ENCODE measurements at regions of chr16 and their contacts with region 1.

Region 1: DNA sequence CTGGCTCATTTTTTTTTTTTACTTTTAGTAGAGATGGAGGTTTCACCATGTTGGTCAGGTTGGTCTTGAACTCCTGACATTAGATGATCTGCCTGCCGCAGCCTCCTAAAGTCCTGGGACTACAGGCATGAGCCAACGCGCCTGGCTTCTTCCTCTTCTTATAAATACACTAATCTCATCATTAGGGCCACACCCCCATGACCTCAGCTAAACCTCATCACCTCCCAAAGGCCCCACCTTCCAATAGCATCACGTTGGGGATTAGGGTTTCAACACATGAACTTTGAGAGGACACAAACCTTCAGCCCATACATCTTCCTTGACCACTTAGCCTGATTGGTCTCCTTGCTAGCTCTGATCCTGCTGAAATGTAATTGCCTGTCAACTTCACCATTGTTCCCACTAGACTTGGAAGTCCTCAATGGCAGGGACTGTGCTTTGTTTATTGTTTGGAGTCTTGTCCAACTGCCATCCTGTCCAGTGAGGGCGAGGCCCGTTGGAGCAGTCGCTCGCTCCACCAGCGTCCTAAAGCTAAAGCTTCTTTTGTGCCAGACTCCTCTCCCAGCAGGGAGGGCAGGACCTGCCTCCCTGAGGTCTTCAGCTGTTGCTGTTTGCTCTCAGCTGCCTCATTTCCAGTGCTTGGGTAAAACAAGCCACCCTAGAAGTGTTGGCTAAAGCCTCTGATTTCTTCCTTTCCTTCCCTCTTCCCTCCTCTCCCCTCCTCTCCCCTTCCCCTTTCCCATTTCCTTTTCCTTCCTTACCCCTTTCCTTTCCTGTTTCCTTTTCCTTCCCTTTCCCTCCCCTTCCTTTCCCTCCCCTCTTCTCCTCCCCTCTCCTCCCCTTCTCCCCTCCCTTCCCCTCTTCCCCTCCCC is 85.3 kb downstream of the HAPSTR1 start:
- DNase-seq: peak; percentile 45 to 92 (median 79)

Region 2: GRCh38 chr16:9225611-9226316 is 49.0 kb after region 1 on chr16:
- intact Hi-C with region 1: loop called (anchors 10 kb)
- DNase-seq: peak in 39 of 42 donors; percentile 13 to 84 (median 50)

Measured in head of caudate nucleus (tissue), 42 donors.